ENCODE measurements at regions of chr17 and their contacts with region 1.

Region 1: DNA sequence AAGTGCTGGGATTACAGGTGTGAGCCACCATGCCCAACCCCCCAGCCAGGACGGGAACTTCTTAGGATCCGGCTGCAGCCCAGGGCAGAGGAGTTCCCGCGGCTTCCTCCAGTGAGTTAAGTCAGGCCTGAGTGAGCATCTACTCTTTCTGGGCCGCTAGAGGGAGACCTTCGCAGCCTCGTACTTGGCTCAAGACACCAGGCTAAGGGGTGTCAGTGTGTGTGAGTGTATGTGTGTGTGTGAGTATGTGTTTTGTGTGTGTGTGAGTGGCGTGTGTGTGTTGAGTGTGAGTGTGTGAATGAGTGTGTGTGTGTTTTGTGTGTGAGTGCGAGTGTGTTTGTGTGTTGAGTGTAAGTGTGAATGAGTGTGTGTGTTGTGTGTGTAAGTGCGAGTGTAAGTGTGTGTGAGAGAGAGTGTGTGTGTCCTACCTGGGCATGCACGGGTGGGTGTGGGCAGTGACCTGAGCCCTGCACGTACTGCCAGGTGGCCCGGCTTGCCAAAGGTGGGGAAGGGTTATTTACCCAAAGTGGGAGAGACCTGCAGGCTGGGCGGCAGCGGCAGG is 58.5 kb downstream of the TMEM235 start:
- DNase-seq: peak; percentile 83 to 91 (median 88)
- ATAC-seq: peak; percentile 93 to 95
- H3K4me3 ChIP-seq: no peak overlapping the region
- H3K27ac ChIP-seq: no peak overlapping the region
- H3K4me1 ChIP-seq: no peaks in the 10 kb centered on the region
- H3K27me3 ChIP-seq: no peaks in the 10 kb centered on the region

Region 2: DNA sequence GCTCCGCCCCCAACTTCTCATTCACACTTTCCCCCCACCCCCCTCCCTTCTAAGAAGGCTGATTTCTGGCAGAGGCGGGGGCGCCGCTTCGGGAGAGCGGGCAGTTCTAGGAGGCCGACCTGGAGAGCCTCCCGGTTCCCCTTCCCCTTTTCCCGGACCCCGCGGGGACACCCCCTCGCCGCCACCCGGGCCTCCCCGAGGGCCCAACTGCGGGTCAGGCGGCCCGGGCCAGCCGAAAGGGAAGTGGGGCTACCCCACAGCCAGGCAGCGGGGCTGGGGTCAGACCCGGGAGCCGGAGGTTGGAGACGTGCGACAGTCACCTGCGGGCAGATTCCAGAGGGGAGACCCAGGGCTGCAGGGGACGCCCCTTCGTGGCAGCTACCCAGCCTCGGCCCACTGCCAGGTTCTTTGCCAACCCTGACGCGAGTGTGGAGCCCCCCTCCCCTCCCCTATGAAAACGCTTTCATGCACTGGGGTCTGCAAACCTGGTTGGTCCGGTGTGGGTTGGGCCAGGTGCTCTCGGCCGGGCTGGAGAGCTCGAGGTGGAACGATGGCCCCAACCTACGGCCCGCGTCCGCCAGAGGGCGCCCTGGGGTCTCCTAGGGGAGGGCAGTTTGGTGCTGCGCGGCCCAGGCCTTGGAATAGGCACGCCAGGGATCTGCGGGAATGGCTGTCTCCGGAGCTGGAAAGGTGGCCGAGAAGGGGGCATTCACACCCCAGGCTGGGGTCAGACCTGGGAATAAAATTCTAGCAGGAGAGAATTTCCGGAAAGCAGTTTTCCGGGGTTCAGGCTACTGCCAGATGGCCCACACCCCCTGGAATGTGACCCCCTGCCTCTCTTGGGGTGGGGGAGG is 70.7 kb after region 1 on chr17:
- intact Hi-C with region 1: loop called in 3 of 4 experiments (anchors 5 kb)
- DNase-seq: peak; percentile 93 to 98 (median 98)
- ATAC-seq: peak; percentile 75 to 79
- H3K4me3 ChIP-seq: peak overlapping the region; percentile 64
- H3K27ac ChIP-seq: peak overlapping the region; percentile 25
- H3K4me1 ChIP-seq: peaks cover 9% of the 10 kb centered on the region
- H3K27me3 ChIP-seq: no peaks in the 10 kb centered on the region

Region 3: GRCh38 chr17:78365561-78366108 is 75.8 kb after region 1 on chr17:
- intact Hi-C with region 1: loop called in 2 of 4 experiments (anchors 5 kb)
- DNase-seq: peak in 2 of 3 donors; percentile 69
- ATAC-seq: peak; percentile 17 to 58
- H3K4me3 ChIP-seq: no peak overlapping the region
- H3K27ac ChIP-seq: peak overlapping the region; percentile 59
- H3K4me1 ChIP-seq: no peaks in the 10 kb centered on the region
- H3K27me3 ChIP-seq: no peaks in the 10 kb centered on the region

Measured in right cardiac atrium (tissue), 5 donors.